ENCODE measurements at regions of chr19 and their contacts with region 1.

Region 1: GRCh38 chr19:32570081-32570785 is 10.8 kb upstream of the PDCD5 start:
- DNase-seq: no peak
- H3K4me3 ChIP-seq: no peak overlapping the region
- H3K27ac ChIP-seq: no peak overlapping the region
- H3K4me1 ChIP-seq: peaks cover 4% of the 10 kb centered on the region
- H3K27me3 ChIP-seq: no peaks in the 10 kb centered on the region
- CTCF ChIP-seq: peak in 2 of 3 experiments; percentile 32 to 54
- POLR2A ChIP-seq: no peak

Region 2: GRCh38 chr19:32287811-32288227 is 282.4 kb before region 1 on chr19:
- intact Hi-C with region 1: loop called (anchors 5 kb)
- DNase-seq: peak in 1 of 2 donors; percentile 55
- H3K4me3 ChIP-seq: no peak overlapping the region
- H3K27ac ChIP-seq: peak overlapping the region; percentile 36
- H3K4me1 ChIP-seq: peaks cover 8% of the 10 kb centered on the region
- H3K27me3 ChIP-seq: no peaks in the 10 kb centered on the region
- CTCF ChIP-seq: peak in 2 of 3 experiments; percentile 16 to 29
- POLR2A ChIP-seq: no peak

Measured in vagina (tissue), 2 donors.